ENCODE measurements at regions of chr12 and their contacts with region 1.

Region 1: DNA sequence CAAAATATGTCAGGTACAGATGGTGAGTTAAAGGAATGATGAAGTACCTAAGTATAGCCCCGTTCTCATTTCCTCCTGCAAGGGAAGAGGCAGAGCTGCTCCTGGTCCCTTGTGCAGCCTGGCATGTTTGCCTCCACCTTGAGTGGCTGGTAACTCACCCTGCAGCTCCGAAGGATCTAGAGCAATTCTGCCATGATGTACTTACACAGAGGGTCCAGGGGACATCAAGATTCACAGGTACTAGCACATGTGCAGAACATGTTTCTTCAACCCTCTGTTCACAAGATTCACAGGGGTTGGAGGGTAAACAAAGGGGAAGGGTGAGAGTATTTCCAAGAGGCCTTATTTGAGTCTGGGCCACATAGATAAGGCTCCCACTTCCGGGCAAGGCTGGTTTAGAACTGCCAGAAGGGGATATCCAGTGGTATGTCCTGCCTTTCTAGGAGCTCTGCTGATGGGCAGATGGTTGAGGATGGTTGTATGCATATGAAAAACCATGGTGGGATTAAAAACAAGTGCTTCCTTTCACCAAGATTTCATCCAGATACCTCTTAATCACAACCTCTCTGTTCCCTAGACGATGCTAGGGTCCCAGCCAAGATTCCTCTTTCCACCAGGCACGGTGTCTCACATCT is 7.7 kb downstream of the DCTN2 start:
- DNase-seq: no peak
- H3K4me3 ChIP-seq: no peak overlapping the region
- H3K27ac ChIP-seq: no peak overlapping the region
- H3K4me1 ChIP-seq: no peaks in the 10 kb centered on the region
- H3K27me3 ChIP-seq: no peaks in the 10 kb centered on the region
- CTCF ChIP-seq: no peak

Region 2: DNA sequence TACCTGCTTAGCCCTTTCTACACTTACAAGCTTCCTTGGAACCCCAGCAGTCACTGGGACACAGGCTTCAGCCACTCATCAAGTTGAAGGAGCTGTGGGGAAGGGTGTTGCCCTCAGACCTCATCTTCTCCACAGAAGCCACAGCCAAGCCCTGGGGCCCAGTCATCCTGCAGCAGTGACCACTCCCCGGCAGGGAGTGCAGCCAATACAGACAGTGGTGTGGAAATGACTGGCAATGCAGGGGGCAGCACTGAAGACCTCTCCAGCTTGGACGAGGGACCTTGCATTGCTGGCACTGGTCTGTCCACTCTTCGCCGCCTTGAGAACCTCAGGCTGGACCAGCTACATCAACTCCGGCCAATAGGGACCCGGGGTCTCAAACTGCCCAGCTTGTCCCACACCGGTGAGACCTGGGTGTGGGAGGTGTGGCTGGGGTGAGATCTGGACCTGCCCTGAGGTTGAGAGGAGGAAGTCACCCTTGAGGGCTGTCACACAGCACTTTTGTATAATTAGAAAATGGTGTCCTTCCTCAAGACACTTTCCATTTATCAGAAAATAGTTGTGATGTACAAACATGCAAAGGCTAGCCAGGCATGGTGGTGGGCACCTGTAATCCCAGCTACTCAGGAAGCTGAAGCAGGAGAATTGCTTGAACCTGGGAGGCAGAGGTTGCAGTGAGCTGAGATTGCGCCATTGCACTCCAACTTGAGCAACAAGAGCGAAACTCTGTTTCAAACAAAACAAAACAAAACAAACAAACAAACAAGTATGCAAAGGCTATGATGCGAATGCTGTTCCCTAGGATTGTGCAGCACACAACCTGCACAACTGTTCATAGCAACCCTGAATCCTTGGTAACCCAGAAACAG is 69.7 kb before region 1 on chr12:
- CTCF ChIA-PET with region 1: no interaction called
- dilution Hi-C with region 1: loop called (anchors 5 kb)
- in situ Hi-C with region 1: no loop called
- intact Hi-C with region 1: no loop called
- DNase-seq: no peak
- H3K4me3 ChIP-seq: no peak overlapping the region
- H3K27ac ChIP-seq: no peak overlapping the region
- H3K4me1 ChIP-seq: no peaks in the 10 kb centered on the region
- H3K27me3 ChIP-seq: peaks cover 3% of the 10 kb centered on the region
- CTCF ChIP-seq: no peak

Region 3: GRCh38 chr12:57627501-57628279 is 88.4 kb after region 1 on chr12:
- CTCF ChIA-PET with region 1: no interaction called
- dilution Hi-C with region 1: loop called (anchors 5 kb)
- in situ Hi-C with region 1: no loop called
- intact Hi-C with region 1: no loop called
- DNase-seq: no peak
- H3K4me3 ChIP-seq: no peak overlapping the region
- H3K27ac ChIP-seq: no peak overlapping the region
- H3K4me1 ChIP-seq: peaks cover 10% of the 10 kb centered on the region
- H3K27me3 ChIP-seq: no peaks in the 10 kb centered on the region
- CTCF ChIP-seq: no peak